ENCODE measurements at regions of chr11 and their contacts with region 1.

Region 1: GRCh38 chr11:32940865-32941264 is 48.3 kb downstream of the QSER1 start:
- DNase-seq: no peak
- H3K4me3 ChIP-seq: no peak overlapping the region
- H3K27ac ChIP-seq: no peak overlapping the region
- H3K4me1 ChIP-seq: peaks cover 0 to 5% of the 10 kb centered on the region in 2 donors
- H3K27me3 ChIP-seq: no peaks in the 10 kb centered on the region
- CTCF ChIP-seq: no peak

Region 2: GRCh38 chr11:32920570-32920969 is 20.3 kb before region 1 on chr11:
- intact Hi-C with region 1: loop called (anchors 1 kb)
- DNase-seq: no peak
- H3K4me3 ChIP-seq: no peak overlapping the region
- H3K27ac ChIP-seq: no peak overlapping the region
- H3K4me1 ChIP-seq: no peaks in the 10 kb centered on the region
- H3K27me3 ChIP-seq: no peaks in the 10 kb centered on the region
- CTCF ChIP-seq: no peak

Region 3: DNA sequence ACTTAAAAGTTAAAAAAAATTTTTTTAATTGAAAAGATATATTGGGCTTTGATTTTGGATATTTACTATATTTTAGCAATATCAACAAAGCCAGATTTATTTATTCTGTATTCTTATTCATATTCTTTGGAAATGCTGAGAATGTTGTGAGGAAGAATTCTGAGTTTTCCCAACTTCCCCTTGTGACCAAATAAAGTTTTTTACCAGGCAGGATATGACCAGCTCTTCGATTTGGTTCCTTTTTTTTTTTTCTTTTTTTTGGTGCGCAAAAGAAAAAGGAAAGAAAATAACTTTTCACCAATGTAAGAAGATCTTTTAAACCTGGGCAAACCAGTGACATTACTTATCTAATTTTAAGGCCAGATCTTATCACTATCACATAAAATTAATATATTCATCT is 111.4 kb after region 1 on chr11:
- intact Hi-C with region 1: no loop called
- DNase-seq: no peak
- H3K4me3 ChIP-seq: no peak overlapping the region
- H3K27ac ChIP-seq: no peak overlapping the region
- H3K4me1 ChIP-seq: no peaks in the 10 kb centered on the region
- H3K27me3 ChIP-seq: no peaks in the 10 kb centered on the region
- CTCF ChIP-seq: no peak

Measured in ascending aorta (tissue), 2 donors.